OCI-LY7 (cell line): ENCODE measurements at regions of chr1 and their contacts with region 1.

Region 1: DNA sequence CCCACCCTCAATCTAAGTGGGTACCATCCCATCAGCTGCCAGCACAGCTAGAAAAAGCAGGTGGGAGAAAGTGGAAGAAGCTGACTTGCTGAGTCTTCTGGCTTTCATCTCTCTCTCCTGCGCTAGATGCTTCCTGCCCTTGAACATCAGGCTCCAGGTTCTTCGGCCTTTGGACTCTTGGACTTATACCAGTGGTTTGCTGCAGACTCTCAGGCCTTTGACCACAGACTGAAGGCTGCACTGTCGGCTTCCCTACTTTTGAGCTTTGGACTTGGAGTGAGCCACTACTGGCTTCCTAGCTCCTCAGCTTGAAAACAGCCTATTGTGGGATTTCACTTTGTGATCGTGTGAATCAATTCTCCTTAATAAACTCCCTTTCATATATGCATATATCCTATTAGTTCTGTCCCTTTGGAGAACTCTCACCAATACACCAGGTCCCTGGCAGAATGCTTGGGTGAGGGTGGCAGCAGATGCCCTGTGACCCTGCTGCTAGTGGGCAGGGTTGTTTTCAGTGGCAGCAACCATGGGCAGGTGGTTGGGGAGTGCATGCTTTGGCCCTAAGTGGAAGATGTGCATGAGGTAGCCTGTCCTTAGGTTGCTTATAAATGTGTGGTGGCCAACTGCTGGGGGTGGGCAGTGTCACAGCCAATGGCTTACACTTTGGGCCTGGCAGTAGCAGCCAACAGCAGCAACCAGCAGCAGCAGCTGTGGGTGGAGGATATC is 10.8 kb upstream of the ADAM30 start:
- DNase-seq: no peak
- H3K4me3 ChIP-seq: no peak overlapping the region
- H3K27ac ChIP-seq: no peak overlapping the region
- H3K4me1 ChIP-seq: no peaks in the 10 kb centered on the region
- CTCF ChIP-seq: no peak

Region 2: GRCh38 chr1:119935373-119935772 is 28.3 kb after region 1 on chr1:
- CTCF ChIA-PET with region 1: no interaction called
- POLR2A ChIA-PET with region 1: no interaction called
- intact Hi-C with region 1: no loop called
- DNase-seq: no peak
- H3K4me3 ChIP-seq: no peak overlapping the region
- H3K27ac ChIP-seq: no peak overlapping the region
- H3K4me1 ChIP-seq: no peaks in the 10 kb centered on the region
- CTCF ChIP-seq: no peak

Region 3: GRCh38 chr1:119954476-119955422 is 47.7 kb after region 1 on chr1:
- CTCF ChIA-PET with region 1: no interaction called
- POLR2A ChIA-PET with region 1: no interaction called
- intact Hi-C with region 1: loop called (anchors 10 kb)
- DNase-seq: no peak
- H3K4me3 ChIP-seq: no peak overlapping the region
- H3K27ac ChIP-seq: no peak overlapping the region
- H3K4me1 ChIP-seq: no peaks in the 10 kb centered on the region
- CTCF ChIP-seq: no peak